Activated naive CD4-positive, alpha-beta T cell treated with anti-CD3 and anti-CD28 coated beads for 36 hours (primary cell): ENCODE measurements at regions of chr14 and their contacts with region 1.

Region 1: GRCh38 chr14:89430391-89431236 is 13.6 kb upstream of the FOXN3 start:
- DNase-seq: peak; percentile 80
- H3K4me3 Mint-ChIP-seq: peak overlapping the region; percentile 81
- H3K27ac Mint-ChIP-seq: peak overlapping the region; percentile 96
- H3K4me1 Mint-ChIP-seq: peaks cover 70% of the 10 kb centered on the region
- H3K27me3 Mint-ChIP-seq: no peaks in the 10 kb centered on the region

Region 2: DNA sequence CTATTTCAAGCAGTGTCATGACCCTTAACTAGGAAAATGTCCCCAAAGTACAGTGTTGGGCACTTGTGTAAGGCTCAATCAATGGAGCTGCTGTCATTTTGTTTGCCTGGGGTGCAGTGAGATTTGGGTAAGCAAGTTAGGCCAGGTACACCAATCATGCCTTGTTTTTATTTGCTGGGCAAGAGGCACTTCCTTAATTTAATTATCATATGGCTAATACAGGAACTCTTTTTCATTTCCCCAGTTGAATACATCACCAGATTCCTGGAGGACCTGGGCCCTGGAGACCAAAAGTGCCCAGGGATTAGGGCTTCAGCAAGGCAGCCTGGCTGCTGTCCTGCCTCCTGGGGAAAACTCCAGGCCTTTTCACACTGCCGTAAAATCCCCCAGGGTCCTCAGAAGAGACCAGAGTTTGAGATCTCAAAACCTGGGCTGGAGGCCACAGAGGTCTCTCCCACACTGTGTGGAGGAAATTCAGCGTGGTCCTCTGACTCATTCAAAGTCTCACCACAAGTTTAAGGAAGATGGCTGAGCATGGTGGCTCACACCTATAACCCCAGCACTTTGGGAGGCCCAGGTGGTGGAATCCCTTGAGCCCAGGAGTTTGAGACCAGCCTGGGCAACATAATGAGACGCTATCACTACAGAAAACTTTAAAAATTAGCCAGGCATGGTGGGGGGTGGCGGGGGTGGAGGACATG is 14.8 kb after region 1 on chr14:
- CTCF ChIA-PET with region 1: interaction called, 4 read pairs
- intact Hi-C with region 1: loop called (anchors 1 kb)
- DNase-seq: peak; percentile 65
- H3K4me3 Mint-ChIP-seq: no peak overlapping the region
- H3K27ac Mint-ChIP-seq: peak overlapping the region; percentile 79
- H3K4me1 Mint-ChIP-seq: peaks cover 60% of the 10 kb centered on the region
- H3K27me3 Mint-ChIP-seq: no peaks in the 10 kb centered on the region

Region 3: GRCh38 chr14:89629383-89629782 is 198.8 kb after region 1 on chr14:
- CTCF ChIA-PET with region 1: no interaction called
- intact Hi-C with region 1: no loop called
- DNase-seq: no peak
- H3K4me3 Mint-ChIP-seq: no peak overlapping the region
- H3K27ac Mint-ChIP-seq: peak overlapping the region; percentile 7
- H3K4me1 Mint-ChIP-seq: peaks cover 69% of the 10 kb centered on the region
- H3K27me3 Mint-ChIP-seq: no peaks in the 10 kb centered on the region

Region 4: DNA sequence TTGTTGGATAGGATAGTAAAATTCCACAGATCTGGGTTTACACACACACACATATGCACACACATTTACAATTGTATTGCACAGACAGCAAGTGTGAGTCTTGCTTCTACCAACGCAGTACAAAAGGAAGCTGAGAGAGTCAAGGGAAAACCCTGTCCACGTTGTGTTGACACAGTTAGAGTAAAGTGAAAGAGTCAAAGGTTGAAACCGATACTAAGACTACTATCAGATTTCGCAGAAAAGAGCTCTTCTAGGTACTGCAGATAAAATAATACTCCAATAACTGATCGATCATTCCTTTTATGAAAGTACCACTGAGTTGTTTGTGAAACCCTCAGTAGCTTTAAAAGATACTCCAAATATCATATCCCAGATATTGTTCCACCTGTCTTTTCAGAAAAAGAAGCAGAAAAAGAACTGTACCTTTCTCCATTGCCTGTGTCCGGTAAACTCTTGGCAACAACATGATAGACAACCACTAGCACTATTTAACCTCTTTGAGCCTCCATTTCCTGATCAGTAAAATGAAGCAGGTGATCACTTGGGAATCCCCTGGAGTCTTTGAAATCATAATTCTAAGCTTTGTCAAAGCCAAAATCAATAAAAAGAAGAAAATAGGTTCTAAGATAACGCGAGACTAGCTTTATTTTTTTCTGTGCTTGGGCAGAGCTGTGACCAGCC is 211.0 kb after region 1 on chr14:
- CTCF ChIA-PET with region 1: interaction called, 3 read pairs
- intact Hi-C with region 1: loop called (anchors 1 kb)
- DNase-seq: peak; percentile 61
- H3K4me3 Mint-ChIP-seq: peak overlapping the region; percentile 57
- H3K27ac Mint-ChIP-seq: peak overlapping the region; percentile 90
- H3K4me1 Mint-ChIP-seq: peaks cover 62% of the 10 kb centered on the region
- H3K27me3 Mint-ChIP-seq: no peaks in the 10 kb centered on the region

Region 5: DNA sequence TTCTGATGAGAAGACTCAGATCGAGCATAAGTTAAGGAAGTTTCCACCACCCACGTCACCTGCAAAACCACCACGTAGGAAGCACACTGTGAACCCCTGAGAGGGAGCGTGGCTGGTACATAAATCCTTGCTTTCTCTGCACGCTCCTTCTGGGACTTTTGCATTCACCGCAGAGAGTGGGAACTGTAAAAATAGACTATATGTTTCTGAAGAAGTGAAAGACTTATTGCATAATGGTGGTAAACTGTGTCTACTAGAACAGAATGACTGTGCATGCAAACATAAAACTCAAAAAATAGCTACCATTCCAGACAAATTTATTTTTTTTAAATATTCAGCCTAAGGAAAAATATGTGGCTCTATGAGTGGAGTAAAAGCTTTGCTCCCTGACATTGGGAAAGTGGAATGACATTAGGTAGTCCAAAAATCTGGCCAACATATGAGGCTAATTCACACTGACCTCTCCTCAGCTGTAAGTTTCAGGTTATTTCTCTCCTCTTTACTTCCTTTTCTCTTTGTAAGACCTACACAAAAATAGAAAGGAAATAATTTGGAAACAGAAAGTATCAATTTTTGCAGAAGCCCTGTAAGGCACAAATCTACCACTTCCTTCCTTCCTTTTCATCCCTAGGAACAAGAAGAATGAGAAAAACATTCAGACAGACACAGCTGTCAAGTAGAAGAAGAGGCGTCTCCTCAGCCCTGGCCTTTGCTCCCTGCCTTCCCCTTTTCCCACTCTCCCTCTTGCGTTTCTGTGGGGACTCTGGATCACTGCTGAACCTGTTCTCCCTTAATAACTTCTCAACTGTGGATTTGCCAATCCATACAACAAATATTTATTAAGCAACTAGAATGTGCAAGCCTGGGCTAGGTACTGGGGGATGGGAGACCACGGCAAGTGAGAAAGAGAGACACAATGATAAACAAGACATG is 250.7 kb after region 1 on chr14:
- CTCF ChIA-PET with region 1: no interaction called
- intact Hi-C with region 1: loop called (anchors 2 kb)
- DNase-seq: peak; percentile 80
- H3K4me3 Mint-ChIP-seq: peak overlapping the region; percentile 44
- H3K27ac Mint-ChIP-seq: peak overlapping the region; percentile 81
- H3K4me1 Mint-ChIP-seq: peaks cover 38% of the 10 kb centered on the region
- H3K27me3 Mint-ChIP-seq: no peaks in the 10 kb centered on the region

Region 6: GRCh38 chr14:89720741-89721315 is 290.2 kb after region 1 on chr14:
- CTCF ChIA-PET with region 1: no interaction called
- intact Hi-C with region 1: loop called (anchors 1 kb)
- DNase-seq: peak; percentile 76
- H3K4me3 Mint-ChIP-seq: peak overlapping the region; percentile 32
- H3K27ac Mint-ChIP-seq: peak overlapping the region; percentile 95
- H3K4me1 Mint-ChIP-seq: peaks cover 68% of the 10 kb centered on the region
- H3K27me3 Mint-ChIP-seq: no peaks in the 10 kb centered on the region

Region 7: DNA sequence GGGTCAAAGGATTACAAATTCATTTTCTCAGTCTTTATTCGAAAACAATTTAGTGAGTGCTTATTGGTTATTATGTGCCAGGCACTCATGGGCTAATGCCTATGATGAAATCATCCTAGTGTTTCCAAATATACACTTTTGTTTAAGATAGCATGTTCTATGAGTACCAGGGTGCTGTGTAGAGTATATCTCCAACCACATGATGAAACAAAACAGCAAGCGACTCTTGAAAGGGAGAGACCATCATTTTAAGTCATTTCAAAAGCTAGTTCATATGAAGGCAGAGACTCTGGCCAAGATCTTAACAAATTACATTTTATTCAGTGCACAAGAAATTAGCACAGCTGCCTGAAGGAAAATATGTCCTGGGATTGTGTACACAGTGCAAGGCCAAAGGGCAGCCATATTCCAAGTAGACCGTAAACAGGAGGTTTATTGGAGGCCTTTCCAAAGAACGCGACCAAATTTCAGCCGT is 319.7 kb after region 1 on chr14:
- CTCF ChIA-PET with region 1: interaction called, 3 read pairs
- intact Hi-C with region 1: loop called (anchors 2 kb)
- DNase-seq: no peak
- H3K4me3 Mint-ChIP-seq: no peak overlapping the region
- H3K27ac Mint-ChIP-seq: no peak overlapping the region
- H3K4me1 Mint-ChIP-seq: peaks cover 26% of the 10 kb centered on the region
- H3K27me3 Mint-ChIP-seq: no peaks in the 10 kb centered on the region

Region 8: GRCh38 chr14:89959853-89960445 is 529.3 kb after region 1 on chr14:
- CTCF ChIA-PET with region 1: no interaction called
- intact Hi-C with region 1: loop called (anchors 2 kb)
- DNase-seq: no peak
- H3K4me3 Mint-ChIP-seq: peak overlapping the region; percentile 36
- H3K27ac Mint-ChIP-seq: peak overlapping the region; percentile 76
- H3K4me1 Mint-ChIP-seq: peaks cover 74% of the 10 kb centered on the region
- H3K27me3 Mint-ChIP-seq: no peaks in the 10 kb centered on the region